Breast epithelium (tissue), 4 donors: ENCODE measurements at regions of chr4 and their contacts with region 1.

Region 1: DNA sequence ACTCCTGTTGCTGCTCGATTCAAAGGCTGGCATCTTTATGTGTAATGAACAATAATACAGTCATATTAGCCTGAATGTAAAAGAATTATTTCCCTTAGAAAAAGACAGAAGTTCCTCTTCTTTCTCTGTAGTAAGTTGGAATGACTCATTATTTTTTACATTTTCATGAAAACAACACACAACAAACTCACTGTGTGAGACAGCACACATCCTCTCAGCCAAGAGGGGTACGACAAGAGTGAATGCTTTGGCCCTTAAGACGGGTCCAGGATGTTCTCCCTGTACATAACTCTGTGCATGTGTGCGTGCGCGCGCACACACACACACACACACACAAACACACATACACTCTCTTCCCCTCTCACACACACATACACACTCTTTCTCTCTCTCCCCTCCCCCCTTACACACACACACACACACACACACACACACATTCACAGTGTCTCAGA is 72.8 kb downstream of the MANBA start:
- DNase-seq: no peak
- H3K4me3 ChIP-seq: no peak overlapping the region
- H3K27ac ChIP-seq: no peak overlapping the region
- H3K4me1 ChIP-seq: no peaks in the 10 kb centered on the region
- H3K27me3 ChIP-seq: no peaks in the 10 kb centered on the region
- CTCF ChIP-seq: no peak
- POLR2A ChIP-seq: no peak

Region 2: GRCh38 chr4:102759831-102760644 is 72.0 kb after region 1 on chr4:
- intact Hi-C with region 1: loop called (anchors 2 kb)
- DNase-seq: no peak
- H3K4me3 ChIP-seq: peak overlapping the region; percentile 74 to 88 (median 83)
- H3K27ac ChIP-seq: peak overlapping the region; percentile 73 to 85
- H3K4me1 ChIP-seq: no peaks in the 10 kb centered on the region
- H3K27me3 ChIP-seq: no peaks in the 10 kb centered on the region
- CTCF ChIP-seq: no peak
- POLR2A ChIP-seq: no peak